AG04450 (cell line): ENCODE measurements at regions of chr2 and their contacts with region 1.

Region 1: DNA sequence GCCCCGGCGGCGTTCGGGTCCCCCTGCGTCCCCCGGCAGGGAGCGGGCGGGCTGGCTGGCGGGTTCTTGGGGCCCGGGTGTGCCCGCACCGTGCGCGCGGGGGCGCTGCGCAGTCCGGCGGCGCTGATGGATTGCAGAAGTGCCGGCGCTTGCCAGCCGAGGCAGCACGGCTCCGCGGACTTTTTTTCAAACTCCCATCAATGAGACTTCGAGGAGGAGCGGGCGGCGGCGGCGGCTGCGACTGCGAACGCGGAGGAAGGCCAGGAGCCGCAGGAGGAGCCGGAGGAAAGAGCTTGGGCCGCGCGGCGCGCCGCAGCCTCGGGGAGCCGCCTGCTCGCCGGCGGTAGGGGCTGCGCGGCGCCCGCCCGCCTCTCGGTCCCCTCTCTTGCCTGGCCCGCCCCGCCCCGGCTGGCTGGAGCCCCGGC is at the start of gene GLI2:
- DNase-seq: peak; percentile 55
- H3K4me3 ChIP-seq: peak within 1 kb of the TSS; percentile 84
- H3K27ac ChIP-seq: peak within 1 kb of the TSS; percentile 91
- H3K27me3 ChIP-seq: no peaks in the 10 kb centered on the region
- CTCF ChIP-seq: peak; percentile 56
- polyA plus RNA-seq, gene GLI2: 5.2 and 8.4 TPM in 2 replicates

Region 2: DNA sequence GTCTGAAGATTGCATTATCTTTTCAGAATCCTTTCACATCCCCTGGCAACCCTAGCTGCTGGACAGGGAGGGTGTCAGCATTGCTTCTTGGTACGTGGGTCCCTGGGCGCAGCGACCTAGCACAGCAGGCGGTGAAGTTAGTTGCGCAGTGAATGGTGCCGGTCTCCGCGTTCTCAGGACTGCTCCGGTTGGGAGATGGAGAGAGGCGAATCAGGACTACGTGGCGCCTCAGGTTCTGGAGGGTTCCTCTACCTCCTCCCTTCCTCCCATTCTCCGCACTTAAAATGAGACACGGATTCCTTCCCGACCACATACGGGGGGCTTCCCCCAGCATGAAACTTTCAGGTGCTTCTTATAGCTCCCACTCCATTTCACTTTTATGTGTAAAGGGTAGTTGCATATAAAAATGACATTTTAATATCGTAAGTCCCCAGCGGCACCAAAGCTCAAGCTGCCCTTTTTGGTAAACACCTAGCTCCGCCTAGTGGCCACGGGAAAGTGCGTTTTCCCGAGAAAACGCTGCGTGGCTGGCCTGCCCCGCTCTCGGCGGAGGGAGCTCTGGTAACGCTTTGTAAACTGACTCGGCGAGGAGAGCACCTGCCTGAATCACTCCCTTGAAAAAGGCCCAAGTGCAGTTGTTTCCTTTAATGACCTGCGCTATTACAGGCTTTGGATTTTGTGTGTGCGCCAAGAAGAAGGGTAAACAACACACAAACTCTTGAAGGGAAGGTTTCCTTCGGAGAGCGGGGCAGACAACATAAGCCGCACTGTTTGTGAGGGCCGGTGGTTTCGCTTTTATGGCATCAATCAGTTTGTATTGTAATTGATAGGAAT is 422.7 kb before region 1 on chr2:
- CTCF ChIA-PET with region 1: no interaction called
- POLR2A ChIA-PET with region 1: no interaction called
- DNase-seq: peak; percentile 49
- H3K4me3 ChIP-seq: peak overlapping the region; percentile 63
- H3K27ac ChIP-seq: peak overlapping the region; percentile 68
- H3K27me3 ChIP-seq: peaks cover 2% of the 10 kb centered on the region
- CTCF ChIP-seq: peak; percentile 98

Region 3: DNA sequence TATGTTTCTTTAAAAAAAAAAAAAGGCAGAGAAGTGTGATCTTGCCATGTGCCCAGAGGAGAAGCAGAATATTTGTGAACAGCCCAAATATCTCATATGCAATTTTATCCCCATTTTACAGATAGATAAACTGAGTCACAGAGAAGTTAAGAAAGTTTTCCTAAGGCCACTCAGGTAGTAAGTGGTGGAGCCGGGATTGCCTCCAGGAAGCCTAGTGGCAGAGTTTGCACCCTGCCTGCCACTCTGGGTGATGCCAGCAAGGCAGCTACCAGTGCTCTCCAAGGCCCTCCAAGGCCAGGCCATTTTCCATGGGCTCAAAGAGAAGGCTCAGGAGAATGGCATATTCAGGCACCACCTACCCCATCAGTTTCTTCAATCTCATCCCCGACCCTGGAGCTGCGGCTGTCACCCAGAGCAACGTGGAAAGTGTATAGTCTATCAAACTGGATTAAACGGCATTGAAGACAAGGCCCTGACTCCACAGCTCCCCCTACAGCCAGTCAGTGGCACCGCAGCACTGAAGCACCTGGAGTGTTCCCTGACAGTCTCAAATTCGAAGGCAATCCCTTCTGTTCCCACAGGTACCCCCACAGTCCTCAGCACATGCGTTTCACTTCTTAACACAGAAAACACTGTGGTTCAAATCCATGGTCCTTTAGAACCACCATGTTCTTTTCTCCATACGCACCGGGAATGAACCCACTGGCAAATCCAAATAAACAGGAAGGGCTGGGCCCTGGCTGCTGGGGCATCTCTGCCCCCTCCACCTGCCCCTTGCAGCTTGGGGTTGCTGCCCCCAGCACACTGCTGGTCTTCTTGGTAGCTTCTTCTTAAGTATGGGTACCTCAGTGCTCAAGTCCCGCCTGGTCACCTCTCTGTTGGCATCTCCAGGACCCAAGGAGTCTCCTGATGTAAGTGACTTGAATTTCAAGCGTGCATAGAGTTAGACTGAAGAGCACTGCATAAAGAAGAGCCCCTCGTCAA is 214.5 kb before region 1 on chr2:
- CTCF ChIA-PET with region 1: no interaction called
- POLR2A ChIA-PET with region 1: no interaction called
- DNase-seq: no peak
- H3K4me3 ChIP-seq: no peak overlapping the region
- H3K27ac ChIP-seq: no peak overlapping the region
- H3K27me3 ChIP-seq: peaks cover 52% of the 10 kb centered on the region
- CTCF ChIP-seq: peak; percentile 93

Region 4: GRCh38 chr2:120749506-120750431 is 14.0 kb after region 1 on chr2:
- CTCF ChIA-PET with region 1: interaction called, 12 read pairs
- POLR2A ChIA-PET with region 1: interaction called, 3 read pairs
- DNase-seq: no peak
- H3K4me3 ChIP-seq: no peak overlapping the region
- H3K27ac ChIP-seq: no peak overlapping the region
- H3K27me3 ChIP-seq: no peaks in the 10 kb centered on the region
- CTCF ChIP-seq: no peak

Region 5: DNA sequence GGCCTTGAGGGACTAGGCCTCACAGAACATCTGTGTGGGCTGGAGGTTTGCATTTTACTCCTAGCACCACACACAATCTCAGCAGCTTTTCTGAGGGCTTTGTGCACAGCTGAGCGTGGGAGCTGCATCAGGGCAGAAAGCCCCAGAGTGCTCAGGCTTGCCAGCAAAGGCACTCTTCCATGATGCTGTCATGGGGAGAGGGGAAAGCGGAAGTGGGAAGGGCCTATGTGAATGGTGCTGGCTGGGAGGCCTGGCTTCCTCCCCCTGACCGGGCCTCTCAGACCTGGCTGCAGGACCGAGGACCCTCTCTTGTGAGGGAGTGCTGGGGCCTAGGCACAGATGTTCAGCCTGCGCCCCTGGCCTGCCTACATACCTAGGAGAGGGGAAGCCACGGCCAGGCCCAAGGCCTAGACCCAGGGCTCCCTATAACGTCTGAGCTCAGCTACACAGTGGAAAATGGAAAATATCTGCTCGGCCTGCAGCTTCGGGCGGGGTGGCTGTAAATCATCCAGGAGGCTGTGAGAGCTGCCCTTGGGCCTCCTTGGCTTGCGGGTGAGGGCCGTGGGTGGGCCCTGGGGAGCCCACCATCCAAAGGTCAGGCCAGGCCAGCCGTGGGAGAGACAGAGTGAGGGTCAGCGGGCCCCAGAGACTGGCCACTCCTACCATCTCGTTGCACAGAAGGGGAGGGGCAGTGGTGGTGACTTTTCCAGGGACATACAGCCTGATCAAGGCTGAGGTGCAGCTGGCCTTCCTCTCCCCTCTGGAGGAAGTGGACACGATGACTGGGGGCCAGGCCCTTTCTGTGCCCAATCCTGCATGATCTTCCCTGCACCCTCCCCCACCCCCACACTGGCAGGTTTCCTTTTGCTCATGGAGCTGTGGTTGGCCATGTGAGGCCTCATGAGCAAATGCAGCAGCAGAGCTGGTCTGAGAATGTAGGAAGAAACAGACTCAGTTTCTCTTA is 22.7 kb after region 1 on chr2:
- CTCF ChIA-PET with region 1: interaction called, 12 read pairs
- POLR2A ChIA-PET with region 1: interaction called, 47 read pairs
- DNase-seq: peak; percentile 65
- H3K4me3 ChIP-seq: peak overlapping the region; percentile 8; the same call in 1 of the 2 replicates
- H3K27ac ChIP-seq: peak overlapping the region; percentile 97
- H3K27me3 ChIP-seq: no peaks in the 10 kb centered on the region
- CTCF ChIP-seq: no peak

Region 6: DNA sequence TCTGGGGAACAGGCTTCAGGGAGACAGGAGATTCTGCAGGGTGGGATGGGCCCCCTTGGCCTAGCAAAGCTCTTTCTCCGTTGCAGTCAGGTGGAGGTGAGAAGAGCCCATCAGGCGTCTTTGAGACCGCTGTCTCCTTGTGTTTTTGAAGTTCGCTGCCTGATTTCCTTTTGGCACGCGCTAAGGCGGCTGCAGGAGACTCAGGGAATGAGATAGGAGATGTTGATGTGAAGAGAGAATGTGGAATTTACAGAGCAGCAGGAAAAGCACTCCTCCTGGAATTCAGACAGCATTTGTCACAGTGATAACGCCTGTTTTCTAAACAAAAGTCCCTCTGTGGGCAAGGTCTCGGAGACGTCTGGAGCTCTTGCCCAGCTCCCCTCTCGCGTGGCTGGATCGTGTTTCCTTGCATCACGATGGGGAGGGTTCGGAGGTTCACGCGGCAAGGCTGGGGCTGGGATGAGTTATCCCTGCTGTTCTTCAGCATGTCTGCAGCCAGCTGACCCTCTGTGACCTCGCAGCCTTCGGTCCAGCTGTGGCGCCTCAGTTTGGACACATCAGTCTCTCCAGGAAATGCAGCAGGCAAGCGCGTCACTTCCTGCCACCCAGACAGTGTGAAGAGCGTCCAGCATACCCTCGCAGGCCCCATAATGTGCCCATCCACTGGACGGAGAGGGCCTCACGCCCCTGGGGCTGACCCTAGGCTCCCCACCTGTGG is 30.1 kb after region 1 on chr2:
- CTCF ChIA-PET with region 1: interaction called, 5 read pairs
- POLR2A ChIA-PET with region 1: interaction called, 47 read pairs
- DNase-seq: peak; percentile 99
- H3K4me3 ChIP-seq: peak overlapping the region; percentile 43
- H3K27ac ChIP-seq: peak overlapping the region; percentile 100
- H3K27me3 ChIP-seq: no peaks in the 10 kb centered on the region
- CTCF ChIP-seq: no peak

Region 7: DNA sequence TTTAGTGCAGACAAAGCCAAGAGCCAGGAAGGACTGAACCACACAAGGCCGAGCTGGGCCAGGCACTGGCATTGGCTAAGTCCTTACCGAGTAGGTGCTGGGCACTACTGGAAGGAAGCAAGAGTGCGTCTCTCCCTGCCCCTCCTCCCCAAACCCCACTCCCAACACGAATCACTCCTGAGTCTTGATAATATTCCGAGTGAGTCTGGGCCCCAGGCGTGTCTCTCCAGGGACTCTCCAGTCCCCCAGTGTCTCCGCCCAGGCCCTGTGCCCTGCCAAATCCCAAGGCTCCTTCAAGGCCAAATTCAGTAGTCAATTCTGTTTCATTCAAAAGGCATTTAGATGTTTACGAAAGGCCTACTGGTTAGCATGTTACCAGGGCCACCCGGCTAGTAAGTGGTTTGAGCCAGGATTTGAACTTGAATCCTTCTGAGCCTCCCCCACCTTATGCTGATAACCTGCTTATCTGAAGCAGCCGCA is 82.7 kb after region 1 on chr2:
- CTCF ChIA-PET with region 1: interaction called, 3 read pairs
- POLR2A ChIA-PET with region 1: interaction called, 14 read pairs
- DNase-seq: peak; percentile 72
- H3K4me3 ChIP-seq: no peak overlapping the region
- H3K27ac ChIP-seq: peak overlapping the region; percentile 67
- H3K27me3 ChIP-seq: no peaks in the 10 kb centered on the region
- CTCF ChIP-seq: no peak

Region 8: DNA sequence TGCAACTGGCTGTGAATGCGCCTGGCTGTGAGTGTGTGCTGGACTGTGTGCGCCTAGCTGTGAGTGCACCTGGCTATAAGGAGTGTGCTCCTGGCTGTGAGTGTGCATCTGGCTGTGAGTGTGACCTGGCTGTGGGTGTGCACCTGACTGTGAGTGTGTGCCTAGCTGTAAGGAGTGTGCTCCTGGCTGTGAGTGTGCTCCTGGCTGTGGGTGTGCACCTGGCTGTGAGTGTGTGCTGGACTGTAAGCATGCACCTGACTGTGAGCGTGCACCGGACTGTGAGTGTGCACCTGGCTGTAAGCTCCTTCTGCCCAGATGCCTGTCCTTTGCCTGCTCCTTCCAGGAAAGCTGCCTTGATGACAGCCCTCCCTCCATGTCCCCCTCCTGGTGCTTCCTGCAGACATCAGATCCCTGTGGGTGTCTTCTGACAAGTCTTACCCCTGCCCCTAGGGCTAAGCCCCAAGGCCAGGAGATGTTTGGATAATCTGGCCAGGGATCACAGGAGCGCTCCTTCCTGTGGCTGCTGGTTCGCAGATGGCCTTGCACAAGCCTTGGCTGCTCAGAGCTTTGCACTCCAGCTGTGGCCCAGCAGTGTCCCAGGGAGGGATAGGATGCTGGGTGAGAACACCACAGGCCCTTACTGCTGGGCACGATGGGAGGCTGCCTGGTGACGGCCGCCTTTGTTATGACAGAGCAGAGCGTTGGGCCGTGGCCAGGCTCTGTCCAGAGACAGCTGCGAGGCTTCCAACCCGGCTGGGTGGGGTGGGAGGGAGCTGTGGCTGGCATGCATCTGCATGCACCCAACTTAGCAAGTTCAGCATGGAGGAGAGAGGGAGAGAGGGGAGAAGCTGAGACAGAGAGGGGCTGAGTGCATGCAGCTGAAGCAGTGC is 89.9 kb after region 1 on chr2:
- CTCF ChIA-PET with region 1: interaction called, 4 read pairs
- POLR2A ChIA-PET with region 1: interaction called, 18 read pairs
- DNase-seq: peak; percentile 78
- H3K4me3 ChIP-seq: peak overlapping the region; percentile 33; the same call in 1 of the 2 replicates
- H3K27ac ChIP-seq: peak overlapping the region; percentile 73
- H3K27me3 ChIP-seq: no peaks in the 10 kb centered on the region
- CTCF ChIP-seq: no peak